Calu3 (cell line): ENCODE measurements at regions of chr12 and their contacts with region 1.

Region 1: GRCh38 chr12:106919910-106920544 is 35.7 kb upstream of the TMEM263 start:
- DNase-seq: peak; percentile 48
- H3K4me3 Mint-ChIP-seq: no peak overlapping the region
- H3K27ac Mint-ChIP-seq: no peak overlapping the region
- H3K4me1 Mint-ChIP-seq: peaks cover 8% of the 10 kb centered on the region
- H3K27me3 Mint-ChIP-seq: no peaks in the 10 kb centered on the region
- CTCF ChIP-seq: peak; percentile 58

Region 2: GRCh38 chr12:106357549-106358395 is 562.3 kb before region 1 on chr12 and contains the start of gene POLR3B:
- CTCF ChIA-PET with region 1: interaction called, 12 read pairs
- intact Hi-C with region 1: loop called (anchors 1 kb)
- DNase-seq: peak; percentile 97
- H3K4me3 Mint-ChIP-seq: peak within 1 kb of the TSS; percentile 84
- H3K27ac Mint-ChIP-seq: peak within 1 kb of the TSS; percentile 97
- H3K4me1 Mint-ChIP-seq: peaks cover 17% of the 10 kb centered on the region
- H3K27me3 Mint-ChIP-seq: no peaks in the 10 kb centered on the region
- CTCF ChIP-seq: peak; percentile 83
- total RNA-seq, gene POLR3B: 13.6 and 13.9 TPM in 2 replicates

Region 3: DNA sequence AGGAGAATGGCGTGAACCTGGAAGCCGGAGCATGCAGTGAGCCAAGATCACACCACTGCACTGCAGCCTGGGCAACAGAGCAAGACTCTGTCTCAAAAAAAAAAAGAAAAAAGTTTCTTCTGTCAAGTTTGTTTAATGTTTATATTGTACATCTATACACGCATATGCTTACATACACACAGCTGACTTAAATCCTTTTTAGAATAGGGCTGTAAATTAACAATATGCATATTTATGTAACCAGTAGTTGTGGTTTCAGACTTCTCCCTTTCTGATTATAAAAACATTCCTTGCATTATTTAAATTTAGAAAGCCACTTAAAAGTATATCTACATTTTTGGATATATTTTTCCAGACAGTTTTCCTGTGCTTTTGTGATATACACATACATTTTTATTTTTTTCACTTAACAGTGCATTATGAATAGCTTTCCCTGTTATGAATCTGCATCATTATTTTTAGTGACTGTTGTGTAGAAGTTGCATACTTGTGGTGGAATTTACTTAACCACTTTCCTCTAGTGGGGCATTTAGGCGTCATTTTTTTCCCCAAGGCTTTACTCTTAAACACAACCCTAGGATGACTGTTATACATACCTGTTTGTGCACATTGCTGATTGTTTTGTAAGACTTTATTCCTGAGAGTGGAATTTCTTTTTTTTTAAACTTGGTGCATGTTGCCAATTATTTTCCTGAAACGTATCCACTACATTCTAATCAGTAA is 533.1 kb before region 1 on chr12:
- CTCF ChIA-PET with region 1: no interaction called
- intact Hi-C with region 1: loop called (anchors 1 kb)
- DNase-seq: no peak
- H3K4me3 Mint-ChIP-seq: no peak overlapping the region
- H3K27ac Mint-ChIP-seq: no peak overlapping the region
- H3K4me1 Mint-ChIP-seq: peaks cover 10% of the 10 kb centered on the region
- H3K27me3 Mint-ChIP-seq: no peaks in the 10 kb centered on the region
- CTCF ChIP-seq: no peak